Heart left ventricle (tissue), 16 donors: ENCODE measurements at regions of chr2 and their contacts with region 1.

Region 1: DNA sequence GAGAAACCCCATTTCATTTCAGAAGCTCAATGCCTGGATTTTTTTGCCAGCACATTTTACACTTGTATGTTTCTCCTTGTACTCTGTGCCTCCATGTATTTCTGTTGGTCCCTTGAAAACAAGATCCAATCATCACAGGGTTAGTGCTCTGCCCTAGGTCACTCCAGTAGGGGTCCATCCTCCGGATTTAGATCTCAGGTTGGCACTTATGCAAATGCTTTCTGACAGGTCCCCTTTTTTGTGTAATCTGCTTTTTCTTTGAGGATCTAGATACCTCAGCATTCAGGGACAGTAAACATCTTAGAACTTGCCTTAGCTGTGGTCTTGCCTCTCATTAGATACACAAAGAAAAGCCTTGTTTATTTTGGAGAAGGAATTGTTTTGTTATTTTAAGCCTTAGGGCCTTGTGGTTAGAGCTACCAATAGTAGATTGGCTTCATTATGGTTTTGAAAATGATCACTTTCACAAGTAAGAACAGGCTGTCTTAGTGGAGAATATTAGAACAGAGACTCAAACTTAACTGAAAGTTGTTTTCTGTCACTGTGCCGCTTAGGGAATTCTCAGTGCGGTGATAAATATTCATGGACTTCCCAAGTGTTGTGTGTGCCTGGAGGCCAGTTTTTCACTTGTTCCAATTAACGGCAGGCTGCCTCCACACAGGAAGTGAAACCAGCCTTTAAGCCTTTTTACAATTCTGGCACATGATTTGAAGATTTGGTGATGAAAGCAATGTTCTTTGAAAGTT is 7.8 kb downstream of the MERTK start:
- DNase-seq: no peak
- ATAC-seq: no peak
- H3K4me3 ChIP-seq: no peak overlapping the region
- H3K27ac ChIP-seq: peak overlapping the region in 11 of 12 donors; percentile 26 to 83 (median 69)
- H3K4me1 ChIP-seq: peaks cover 0 to 91% (median 64%) of the 10 kb centered on the region in 12 donors
- H3K27me3 ChIP-seq: no peaks in the 10 kb centered on the region
- CTCF ChIP-seq: no peak
- POLR2A ChIP-seq: no peak

Region 2: DNA sequence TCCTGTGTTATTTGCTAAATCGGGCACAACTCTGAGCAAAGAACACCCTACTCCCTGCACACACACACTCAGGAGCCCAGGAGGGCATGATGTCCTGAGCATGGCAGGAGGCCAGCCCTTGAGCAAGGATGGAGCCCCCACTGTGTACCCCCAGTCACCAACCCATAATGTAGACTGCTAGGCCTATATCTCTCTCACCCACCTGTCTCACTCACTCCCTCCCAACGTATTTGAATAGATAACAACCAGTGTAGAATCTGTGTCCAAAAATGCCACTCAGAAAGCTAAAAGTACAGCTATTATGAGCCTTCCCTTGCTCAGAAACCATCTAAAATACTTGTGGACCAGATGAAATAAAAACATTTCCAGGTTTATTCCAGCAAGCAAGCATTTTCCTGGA is 21.6 kb after region 1 on chr2:
- intact Hi-C with region 1: loop called in 1 of 10 experiments (anchors 2 kb)
- DNase-seq: no peak
- ATAC-seq: peak in 1 of 4 donors; percentile 41
- H3K4me3 ChIP-seq: no peak overlapping the region
- H3K27ac ChIP-seq: no peak overlapping the region
- H3K4me1 ChIP-seq: peaks cover 0 to 11% (median 3%) of the 10 kb centered on the region in 12 donors
- H3K27me3 ChIP-seq: no peaks in the 10 kb centered on the region
- CTCF ChIP-seq: no peak
- POLR2A ChIP-seq: no peak

Region 3: GRCh38 chr2:111946294-111947114 is 40.3 kb after region 1 on chr2:
- intact Hi-C with region 1: loop called in 4 of 10 experiments (anchors 5 to 10 kb)
- DNase-seq: peak in 4 of 5 donors; percentile 25 to 48 (median 36)
- ATAC-seq: peak; percentile 49 to 95 (median 92)
- H3K4me3 ChIP-seq: no peak overlapping the region
- H3K27ac ChIP-seq: peak overlapping the region; percentile 2 to 80 (median 55)
- H3K4me1 ChIP-seq: peaks cover 0 to 28% (median 12%) of the 10 kb centered on the region in 12 donors
- H3K27me3 ChIP-seq: no peaks in the 10 kb centered on the region
- CTCF ChIP-seq: no peak
- POLR2A ChIP-seq: no peak